Gastrocnemius medialis (tissue), 4 donors: ENCODE measurements at regions of chr6 and their contacts with region 1.

Region 1: GRCh38 chr6:117525607-117526006 is 43.1 kb downstream of the DCBLD1 start:
- DNase-seq: no peak
- ATAC-seq: no peak
- H3K4me3 ChIP-seq: no peak overlapping the region
- H3K27ac ChIP-seq: no peak overlapping the region
- H3K4me1 ChIP-seq: no peaks in the 10 kb centered on the region
- H3K27me3 ChIP-seq: no peaks in the 10 kb centered on the region
- CTCF ChIP-seq: no peak
- POLR2A ChIP-seq: no peak

Region 2: DNA sequence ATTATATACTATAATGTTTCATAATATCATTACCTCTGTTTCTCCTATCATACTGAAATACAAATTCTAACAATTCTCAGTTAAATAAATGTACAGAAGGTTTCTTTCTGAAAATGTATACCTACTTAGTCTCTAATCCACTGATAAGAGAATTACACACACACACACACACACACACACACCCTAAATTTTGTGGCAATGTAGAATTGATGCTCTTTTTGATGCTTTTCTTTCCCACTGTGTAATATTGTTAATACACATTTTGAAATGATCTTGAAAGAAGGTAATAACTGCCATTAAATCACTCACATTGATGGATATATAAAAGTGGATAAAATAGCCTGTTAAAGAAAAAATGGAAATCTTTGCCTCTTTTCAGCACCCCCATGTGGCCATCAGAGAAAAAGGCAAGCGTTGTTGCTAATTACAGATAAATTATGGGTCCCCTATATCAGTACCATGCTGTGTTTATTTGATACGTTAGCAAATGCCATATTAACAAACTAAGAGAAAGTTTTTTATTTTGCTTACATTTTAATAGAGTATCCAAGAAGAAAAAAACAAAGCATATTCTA is 336.9 kb before region 1 on chr6:
- in situ Hi-C with region 1: no loop called
- intact Hi-C with region 1: no loop called
- DNase-seq: no peak
- ATAC-seq: peak in 1 of 2 donors; percentile 26
- H3K4me3 ChIP-seq: no peak overlapping the region
- H3K27ac ChIP-seq: no peak overlapping the region
- H3K4me1 ChIP-seq: no peaks in the 10 kb centered on the region
- H3K27me3 ChIP-seq: no peaks in the 10 kb centered on the region
- CTCF ChIP-seq: peak in 4 of 5 experiments; percentile 49 to 58 (median 54)
- POLR2A ChIP-seq: no peak

Region 3: GRCh38 chr6:117290173-117290846 is 235.3 kb before region 1 on chr6:
- in situ Hi-C with region 1: no loop called
- intact Hi-C with region 1: no loop called
- DNase-seq: peak in 1 of 2 donors; percentile 25
- ATAC-seq: peak; percentile 94 to 96
- H3K4me3 ChIP-seq: peak overlapping the region in 3 of 4 donors; percentile 16 to 36 (median 28)
- H3K27ac ChIP-seq: peak overlapping the region; percentile 75 to 84 (median 78)
- H3K4me1 ChIP-seq: peaks cover 31 to 40% of the 10 kb centered on the region in 2 donors
- H3K27me3 ChIP-seq: no peaks in the 10 kb centered on the region
- CTCF ChIP-seq: no peak
- POLR2A ChIP-seq: peak; percentile 32 to 83

Region 4: DNA sequence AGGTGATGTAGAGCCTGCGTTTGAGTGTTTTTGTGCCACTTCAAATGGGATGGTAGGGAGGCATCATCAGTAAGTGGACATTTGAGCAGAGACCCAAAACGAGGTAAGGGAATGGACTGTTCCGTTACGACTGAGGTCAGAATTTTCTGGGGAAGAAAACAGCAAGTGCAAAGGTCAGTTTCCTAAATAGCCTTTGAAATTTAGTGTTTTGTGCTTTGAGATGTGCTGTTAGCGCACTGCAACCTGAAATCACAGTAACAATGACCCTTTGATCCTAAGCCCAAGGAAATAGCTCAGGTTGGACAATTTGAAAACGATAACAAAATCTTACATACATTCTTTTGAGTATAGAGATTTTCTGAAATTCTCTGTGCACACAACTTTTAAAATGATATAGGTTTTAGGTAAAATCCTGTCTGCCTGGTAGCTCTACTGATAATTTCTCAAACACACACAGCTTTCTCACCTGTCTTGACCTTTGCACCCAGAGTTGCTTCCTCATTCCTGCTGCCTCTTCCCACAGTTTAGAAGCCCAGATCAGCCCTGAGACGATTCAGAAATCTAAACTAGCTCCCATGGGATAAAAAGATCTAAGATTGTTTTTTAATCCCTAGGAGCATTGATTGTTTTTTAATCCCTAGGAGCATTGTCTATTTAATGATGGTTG is 21.0 kb before region 1 on chr6:
- in situ Hi-C with region 1: no loop called
- intact Hi-C with region 1: loop called (anchors 1 kb)
- DNase-seq: no peak
- ATAC-seq: no peak
- H3K4me3 ChIP-seq: no peak overlapping the region
- H3K27ac ChIP-seq: peak overlapping the region in 1 of 4 donors; percentile 12
- H3K4me1 ChIP-seq: peaks cover 4 to 9% of the 10 kb centered on the region in 2 donors
- H3K27me3 ChIP-seq: no peaks in the 10 kb centered on the region
- CTCF ChIP-seq: no peak
- POLR2A ChIP-seq: no peak